ENCODE measurements at regions of chr5 and their contacts with region 1.

Region 1: DNA sequence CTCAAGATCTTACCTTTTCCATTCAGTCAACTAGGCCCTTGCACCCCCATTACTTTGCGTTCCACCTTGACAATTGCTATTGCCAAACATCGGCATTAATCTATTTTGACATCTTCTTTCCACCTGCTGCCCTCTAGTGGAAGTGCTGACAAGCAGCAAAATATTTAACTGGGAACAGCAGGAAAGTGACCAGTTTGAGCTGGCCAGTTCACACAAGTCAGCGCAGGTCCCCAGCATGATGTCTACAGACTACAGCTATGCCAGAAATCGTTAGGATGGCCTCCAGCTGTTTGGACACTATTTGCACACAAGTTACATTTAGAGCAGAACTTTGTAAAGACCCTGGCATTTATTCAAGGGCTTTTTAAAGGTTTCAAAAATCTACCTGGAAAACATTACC is 160.1 kb downstream of the GHR start:
- DNase-seq: no peak
- ATAC-seq: no peak
- H3K4me3 Mint-ChIP-seq: no peak overlapping the region
- H3K27ac Mint-ChIP-seq: no peak overlapping the region
- H3K4me1 Mint-ChIP-seq: peaks cover 3% of the 10 kb centered on the region
- H3K27me3 Mint-ChIP-seq: peaks cover 8% of the 10 kb centered on the region
- CTCF ChIP-seq: no peak

Region 2: GRCh38 chr5:42076749-42077148 is 506.6 kb before region 1 on chr5:
- CTCF ChIA-PET with region 1: no interaction called
- POLR2A ChIA-PET with region 1: no interaction called
- intact Hi-C with region 1: no loop called
- DNase-seq: no peak
- ATAC-seq: no peak
- H3K4me3 Mint-ChIP-seq: no peak overlapping the region
- H3K27ac Mint-ChIP-seq: no peak overlapping the region
- H3K4me1 Mint-ChIP-seq: no peaks in the 10 kb centered on the region
- H3K27me3 Mint-ChIP-seq: peaks cover 6% of the 10 kb centered on the region
- CTCF ChIP-seq: no peak

Region 3: GRCh38 chr5:42461507-42461906 is 121.8 kb before region 1 on chr5:
- CTCF ChIA-PET with region 1: no interaction called
- POLR2A ChIA-PET with region 1: no interaction called
- intact Hi-C with region 1: no loop called
- DNase-seq: no peak
- ATAC-seq: no peak
- H3K4me3 Mint-ChIP-seq: no peak overlapping the region
- H3K27ac Mint-ChIP-seq: no peak overlapping the region
- H3K4me1 Mint-ChIP-seq: no peaks in the 10 kb centered on the region
- H3K27me3 Mint-ChIP-seq: peaks cover 5% of the 10 kb centered on the region
- CTCF ChIP-seq: no peak

Region 4: GRCh38 chr5:42889311-42889933 is 306.1 kb after region 1 on chr5:
- CTCF ChIA-PET with region 1: no interaction called
- POLR2A ChIA-PET with region 1: no interaction called
- intact Hi-C with region 1: loop called (anchors 2 kb)
- DNase-seq: no peak
- ATAC-seq: peak; percentile 60
- H3K4me3 Mint-ChIP-seq: no peak overlapping the region
- H3K27ac Mint-ChIP-seq: no peak overlapping the region
- H3K4me1 Mint-ChIP-seq: no peaks in the 10 kb centered on the region
- H3K27me3 Mint-ChIP-seq: peaks cover 11% of the 10 kb centered on the region
- CTCF ChIP-seq: peak; percentile 69